Activated CD8-positive, alpha-beta memory T cell treated with anti-CD3 and anti-CD28 coated beads, Interleukin-2, amount 10 ng/mL, durations not matched to agents 7 days and 5 days (primary cell): ENCODE measurements at regions of chr11 and their contacts with region 1.

Region 1: DNA sequence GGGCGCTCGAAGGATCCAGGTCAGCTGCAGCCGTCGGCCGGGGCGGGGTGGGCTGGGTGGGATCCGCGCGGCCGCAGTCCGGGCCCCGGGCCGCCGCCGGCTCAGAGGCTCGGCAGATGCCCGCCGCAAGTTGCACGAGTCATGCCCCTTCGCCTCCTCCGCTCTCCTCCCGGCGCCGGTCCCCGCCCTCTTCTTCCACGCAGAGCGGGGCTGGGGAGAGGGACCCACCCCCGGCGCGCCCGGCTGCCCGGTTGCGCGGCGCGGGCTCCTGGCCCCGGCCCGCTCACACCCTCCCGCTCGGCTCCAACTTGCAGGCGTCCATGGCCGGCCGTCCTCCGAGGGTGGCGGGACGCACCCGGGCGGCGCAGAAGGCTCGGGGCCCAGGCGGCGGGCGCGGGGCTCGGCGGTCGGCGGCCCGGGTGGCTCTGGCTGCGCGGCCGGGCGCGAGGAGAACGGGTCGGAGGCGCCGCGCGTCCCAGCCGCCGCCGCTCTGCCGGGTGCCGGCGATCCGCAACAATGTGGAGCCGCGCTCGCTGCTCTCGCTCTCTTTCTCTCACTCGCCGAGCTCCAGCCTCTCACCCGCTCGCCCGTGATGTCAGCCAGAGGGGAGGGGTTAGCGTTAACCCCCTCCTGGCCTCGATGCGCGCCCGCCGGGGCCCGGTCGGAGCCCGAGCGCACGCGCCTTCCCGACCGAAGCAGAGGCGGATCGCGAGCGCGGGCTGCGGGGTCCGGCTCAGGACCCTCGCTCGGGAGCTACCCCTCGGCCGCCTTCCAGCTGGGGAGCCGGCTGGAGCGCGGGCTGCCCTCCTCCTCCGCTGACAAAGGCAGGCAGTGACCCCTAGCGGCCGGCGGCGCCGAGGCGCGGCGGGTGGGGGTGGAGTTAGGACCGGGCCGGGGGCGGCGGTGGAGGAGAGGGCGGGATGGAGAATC is at the start of gene NECTIN1:
- DNase-seq: peak; percentile 85
- ATAC-seq: peak; percentile 91
- H3K4me3 Mint-ChIP-seq: peak within 1 kb of the TSS; percentile 65
- H3K27ac Mint-ChIP-seq: no peak within 1 kb of the TSS
- H3K4me1 Mint-ChIP-seq: peaks cover 12% of the 10 kb centered on the region
- H3K27me3 Mint-ChIP-seq: peaks cover 66% of the 10 kb centered on the region
- total RNA-seq, gene NECTIN1: 0.53 to 0.98 TPM

Region 2: GRCh38 chr11:119666463-119667131 is 62.3 kb before region 1 on chr11:
- CTCF ChIA-PET with region 1: interaction called, 83 read pairs
- DNase-seq: peak; percentile 71
- ATAC-seq: peak; percentile 92
- H3K4me3 Mint-ChIP-seq: no peak overlapping the region
- H3K27ac Mint-ChIP-seq: no peak overlapping the region
- H3K4me1 Mint-ChIP-seq: no peaks in the 10 kb centered on the region
- H3K27me3 Mint-ChIP-seq: peaks cover 9% of the 10 kb centered on the region

Region 3: GRCh38 chr11:119684361-119685110 is 44.4 kb before region 1 on chr11:
- CTCF ChIA-PET with region 1: interaction called, 55 read pairs
- DNase-seq: peak; percentile 66
- ATAC-seq: peak; percentile 68
- H3K4me3 Mint-ChIP-seq: no peak overlapping the region
- H3K27ac Mint-ChIP-seq: peak overlapping the region; percentile 50
- H3K4me1 Mint-ChIP-seq: peaks cover 23% of the 10 kb centered on the region
- H3K27me3 Mint-ChIP-seq: peaks cover 25% of the 10 kb centered on the region

Region 4: GRCh38 chr11:119741369-119742262 is 12.7 kb after region 1 on chr11:
- CTCF ChIA-PET with region 1: interaction called, 25 read pairs
- DNase-seq: peak; percentile 57
- ATAC-seq: peak; percentile 72
- H3K4me3 Mint-ChIP-seq: no peak overlapping the region
- H3K27ac Mint-ChIP-seq: no peak overlapping the region
- H3K4me1 Mint-ChIP-seq: no peaks in the 10 kb centered on the region
- H3K27me3 Mint-ChIP-seq: peaks cover 50% of the 10 kb centered on the region